ENCODE measurements at regions of chr10 and their contacts with region 1.

Region 1: GRCh38 chr10:35581655-35582054 is 23.5 kb upstream of the GJD4 start:
- DNase-seq: no peak
- H3K4me3 ChIP-seq: no peak overlapping the region
- H3K27ac ChIP-seq: no peak overlapping the region
- H3K4me1 ChIP-seq: no peaks in the 10 kb centered on the region
- H3K27me3 ChIP-seq: no peaks in the 10 kb centered on the region
- CTCF ChIP-seq: no peak

Region 2: GRCh38 chr10:35208536-35208935 is 373.1 kb before region 1 on chr10:
- CTCF ChIA-PET with region 1: no interaction called
- POLR2A ChIA-PET with region 1: no interaction called
- intact Hi-C with region 1: no loop called
- DNase-seq: no peak
- H3K4me3 ChIP-seq: no peak overlapping the region
- H3K27ac ChIP-seq: no peak overlapping the region
- H3K4me1 ChIP-seq: peaks cover 12% of the 10 kb centered on the region
- H3K27me3 ChIP-seq: no peaks in the 10 kb centered on the region
- CTCF ChIP-seq: no peak

Region 3: DNA sequence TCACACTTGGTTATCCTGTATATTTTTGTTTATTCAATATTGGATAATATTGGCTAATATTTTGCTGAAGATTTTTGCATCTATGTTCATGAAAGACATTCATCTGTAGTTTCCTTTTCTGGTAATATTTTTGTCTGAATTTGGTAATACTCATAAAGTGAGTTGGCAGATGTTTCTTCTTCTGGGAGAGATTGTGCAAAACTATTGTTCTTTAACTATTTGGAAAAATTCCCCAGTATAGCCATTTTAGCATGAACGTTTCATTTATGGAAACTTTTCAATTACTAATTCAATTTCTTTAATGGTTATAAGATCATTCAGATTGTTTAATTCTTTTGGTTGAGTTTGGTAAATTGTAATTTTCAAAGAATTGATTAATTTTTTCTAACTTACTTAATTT is 621.2 kb after region 1 on chr10:
- CTCF ChIA-PET with region 1: no interaction called
- POLR2A ChIA-PET with region 1: interaction called, 13 read pairs
- intact Hi-C with region 1: no loop called
- DNase-seq: no peak
- H3K4me3 ChIP-seq: no peak overlapping the region
- H3K27ac ChIP-seq: no peak overlapping the region
- H3K4me1 ChIP-seq: no peaks in the 10 kb centered on the region
- H3K27me3 ChIP-seq: no peaks in the 10 kb centered on the region
- CTCF ChIP-seq: no peak